RWPE1 (cell line): ENCODE measurements at regions of chr11 and their contacts with region 1.

Region 1: DNA sequence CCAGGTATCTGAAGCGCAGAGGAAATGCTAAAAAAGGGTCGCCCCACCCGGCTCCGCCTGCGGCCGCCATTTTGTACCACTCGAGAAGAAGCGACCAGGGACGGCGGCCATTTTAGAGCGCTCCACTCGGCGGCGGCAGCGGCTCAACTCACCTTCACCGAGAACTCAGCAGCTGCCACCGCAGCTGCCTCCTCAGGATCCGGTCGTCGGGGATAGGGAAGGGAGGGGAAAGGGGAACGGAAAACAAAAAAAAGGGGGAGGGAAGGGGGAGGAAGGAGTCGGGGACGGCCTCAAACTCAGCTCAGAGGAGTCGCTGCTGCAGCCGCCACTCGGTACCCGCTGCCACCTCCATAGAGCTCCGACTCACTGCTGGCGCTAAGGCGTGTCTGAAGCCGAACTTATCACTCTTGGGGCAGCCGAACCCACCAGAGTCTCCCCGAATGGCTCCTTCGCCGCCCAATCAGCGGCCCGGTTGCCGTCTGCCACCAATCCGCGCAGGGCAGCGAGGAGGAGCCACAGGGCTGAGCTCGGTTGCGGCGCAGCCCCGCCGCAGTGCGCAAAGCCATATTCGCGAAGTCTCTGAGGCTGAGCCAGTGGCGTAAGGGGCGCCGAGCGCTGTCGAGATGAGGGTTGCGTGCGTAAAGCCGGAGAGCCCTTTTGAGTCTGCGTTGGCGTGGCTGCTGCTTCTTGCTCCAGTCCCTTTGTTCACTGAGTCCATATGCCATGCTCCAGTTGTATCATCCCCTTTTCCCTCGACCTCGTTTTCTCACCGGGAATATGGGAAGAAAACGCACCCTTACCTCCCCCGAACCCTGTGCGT is at the start of gene EIF4G2:
- DNase-seq: peak; percentile 99
- H3K27ac ChIP-seq: peak within 1 kb of the TSS; percentile 96
- CTCF ChIP-seq: no peak

Region 2: GRCh38 chr11:10824888-10825287 is 16.1 kb after region 1 on chr11:
- CTCF ChIA-PET with region 1: no interaction called
- POLR2A ChIA-PET with region 1: no interaction called
- DNase-seq: no peak
- H3K27ac ChIP-seq: no peak overlapping the region
- CTCF ChIP-seq: no peak

Region 3: GRCh38 chr11:10857709-10858438 is 49.1 kb after region 1 on chr11 and contains the start of gene ZBED5:
- CTCF ChIA-PET with region 1: interaction called, 4 read pairs
- POLR2A ChIA-PET with region 1: interaction called, 24 read pairs
- DNase-seq: peak; percentile 96
- H3K27ac ChIP-seq: peak within 1 kb of the TSS; percentile 100
- CTCF ChIP-seq: no peak

Region 4: GRCh38 chr11:10990637-10991193 is 182.0 kb after region 1 on chr11:
- CTCF ChIA-PET with region 1: no interaction called
- POLR2A ChIA-PET with region 1: no interaction called
- DNase-seq: no peak
- H3K27ac ChIP-seq: no peak overlapping the region
- CTCF ChIP-seq: no peak